Naive thymus-derived CD4-positive, alpha-beta T cell (primary cell): ENCODE measurements at regions of chrX and their contacts with region 1.

Region 1: DNA sequence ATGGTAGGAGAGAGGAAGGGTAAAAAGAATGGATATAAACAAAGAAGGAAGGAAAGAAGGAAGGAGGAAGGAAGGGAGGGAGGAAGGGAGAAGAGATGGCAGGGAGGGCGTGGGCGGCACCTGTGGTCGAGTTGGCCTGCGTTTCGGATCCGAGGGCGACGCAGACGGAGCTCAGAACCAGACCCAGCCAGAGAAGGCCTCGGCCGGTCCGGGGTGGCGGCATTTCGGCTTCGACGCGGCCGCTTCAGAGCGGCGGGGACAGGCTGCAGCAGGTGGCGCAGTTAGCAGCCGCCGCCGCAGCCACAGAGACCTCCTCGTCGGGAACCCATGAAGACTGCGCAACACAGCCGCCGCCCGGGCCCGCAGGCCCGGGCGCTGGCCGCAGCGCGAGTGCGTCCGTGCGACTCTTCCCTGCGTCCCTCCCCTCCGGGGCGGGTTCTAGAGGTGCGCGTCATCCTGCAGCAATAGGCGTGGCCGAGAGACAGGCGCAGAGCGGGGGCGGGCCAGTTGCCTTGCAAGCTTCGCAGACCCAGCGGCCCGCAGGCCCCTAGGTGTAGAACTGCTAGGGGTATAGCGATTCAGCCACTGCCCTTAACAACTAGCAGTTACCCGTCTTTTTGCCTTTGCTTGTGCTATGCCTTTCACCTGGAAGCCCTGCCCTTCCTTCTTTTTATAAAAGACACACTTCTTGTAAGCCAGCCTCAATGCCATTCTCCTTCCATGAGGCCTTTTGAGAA is at the start of gene IDS:
- DNase-seq: peak; percentile 68 to 88 (median 81)
- ATAC-seq: peak; percentile 85
- H3K4me3 ChIP-seq: peak within 1 kb of the TSS; percentile 72
- H3K4me3 Mint-ChIP-seq: peak within 1 kb of the TSS; percentile 86 to 100 (median 91)
- H3K27ac ChIP-seq: peak within 1 kb of the TSS; percentile 98
- H3K27ac Mint-ChIP-seq: peak within 1 kb of the TSS; percentile 87 to 98 (median 94)
- H3K4me1 ChIP-seq: peaks cover 6 to 13% of the 10 kb centered on the region in 2 donors
- H3K4me1 Mint-ChIP-seq: peaks cover 14 to 42% (median 23%) of the 10 kb centered on the region in 7 donors
- H3K27me3 ChIP-seq: no peaks in the 10 kb centered on the region
- H3K27me3 Mint-ChIP-seq: peaks cover 0 to 8% (median 0%) of the 10 kb centered on the region in 5 donors
- total RNA-seq, gene IDS: 73.1 to 317 (median 133) TPM

Region 2: GRCh38 chrX:147911192-147912022 is 1593.7 kb before region 1 on chrX and contains the start of gene FMR1:
- CTCF ChIA-PET with region 1: no interaction called
- POLR2A ChIA-PET with region 1: interaction called, 3 read pairs
- intact Hi-C with region 1: loop called (anchors 1 to 10 kb)
- DNase-seq: peak; percentile 83 to 95 (median 93)
- ATAC-seq: peak; percentile 96
- H3K4me3 ChIP-seq: peak within 1 kb of the TSS; percentile 71
- H3K4me3 Mint-ChIP-seq: peak within 1 kb of the TSS; percentile 87 to 98 (median 96)
- H3K27ac ChIP-seq: peak within 1 kb of the TSS; percentile 93
- H3K27ac Mint-ChIP-seq: peak within 1 kb of the TSS; percentile 87 to 97 (median 94)
- H3K4me1 ChIP-seq: peaks cover 0 to 35% of the 10 kb centered on the region in 2 donors
- H3K4me1 Mint-ChIP-seq: peaks cover 7 to 43% (median 34%) of the 10 kb centered on the region in 7 donors
- H3K27me3 ChIP-seq: no peaks in the 10 kb centered on the region
- H3K27me3 Mint-ChIP-seq: peaks cover 0 to 2% (median 0%) of the 10 kb centered on the region in 5 donors
- total RNA-seq, gene FMR1: 50.6 to 84.2 (median 76.8) TPM

Region 3: GRCh38 chrX:149521438-149521837 is 16.4 kb after region 1 on chrX:
- CTCF ChIA-PET with region 1: no interaction called
- POLR2A ChIA-PET with region 1: interaction called, 15 read pairs
- intact Hi-C with region 1: loop called (anchors 1 to 2 kb)
- DNase-seq: peak in 7 of 9 donors; percentile 17 to 51 (median 49)
- ATAC-seq: peak; percentile 30
- H3K4me3 ChIP-seq: no peak overlapping the region
- H3K4me3 Mint-ChIP-seq: peak overlapping the region; percentile 36 to 80 (median 68)
- H3K27ac ChIP-seq: no peak overlapping the region
- H3K27ac Mint-ChIP-seq: peak overlapping the region in 6 of 9 donors; percentile 21 to 79 (median 54)
- H3K4me1 ChIP-seq: peaks cover 32 to 48% of the 10 kb centered on the region in 2 donors
- H3K4me1 Mint-ChIP-seq: peaks cover 15 to 58% (median 32%) of the 10 kb centered on the region in 7 donors
- H3K27me3 ChIP-seq: no peaks in the 10 kb centered on the region
- H3K27me3 Mint-ChIP-seq: no peaks in the 10 kb centered on the region

Region 4: DNA sequence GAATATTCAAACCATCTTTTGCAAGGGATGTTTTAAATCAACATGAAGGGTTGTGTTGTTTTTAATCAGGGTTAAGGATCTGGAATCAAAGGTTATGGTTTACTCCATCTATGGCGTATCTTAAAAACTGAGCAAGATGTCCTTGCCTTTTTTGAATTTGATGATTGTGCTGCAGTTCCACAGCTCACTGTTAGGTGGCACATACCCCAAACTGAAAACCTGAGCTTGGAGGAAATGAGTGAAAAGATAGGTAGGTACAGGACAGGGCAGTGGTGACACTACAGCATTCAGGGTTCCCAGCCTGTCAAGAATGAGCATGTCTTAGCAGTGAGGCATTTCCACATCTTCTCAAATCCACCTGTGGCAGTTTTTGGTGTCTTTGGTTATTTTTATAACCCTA is 22.6 kb after region 1 on chrX:
- CTCF ChIA-PET with region 1: interaction called, 5 read pairs
- POLR2A ChIA-PET with region 1: interaction called, 15 read pairs
- intact Hi-C with region 1: loop called in 1 of 2 experiments (anchors 1 kb)
- DNase-seq: peak in 7 of 9 donors; percentile 27 to 62 (median 36)
- ATAC-seq: peak; percentile 43
- H3K4me3 ChIP-seq: no peak overlapping the region
- H3K4me3 Mint-ChIP-seq: peak overlapping the region in 3 of 10 donors; percentile 4 to 33 (median 10)
- H3K27ac ChIP-seq: no peak overlapping the region
- H3K27ac Mint-ChIP-seq: peak overlapping the region; percentile 35 to 88 (median 77)
- H3K4me1 ChIP-seq: peaks cover 18 to 26% of the 10 kb centered on the region in 2 donors
- H3K4me1 Mint-ChIP-seq: peaks cover 0 to 31% (median 14%) of the 10 kb centered on the region in 7 donors
- H3K27me3 ChIP-seq: no peaks in the 10 kb centered on the region
- H3K27me3 Mint-ChIP-seq: no peaks in the 10 kb centered on the region

Region 5: DNA sequence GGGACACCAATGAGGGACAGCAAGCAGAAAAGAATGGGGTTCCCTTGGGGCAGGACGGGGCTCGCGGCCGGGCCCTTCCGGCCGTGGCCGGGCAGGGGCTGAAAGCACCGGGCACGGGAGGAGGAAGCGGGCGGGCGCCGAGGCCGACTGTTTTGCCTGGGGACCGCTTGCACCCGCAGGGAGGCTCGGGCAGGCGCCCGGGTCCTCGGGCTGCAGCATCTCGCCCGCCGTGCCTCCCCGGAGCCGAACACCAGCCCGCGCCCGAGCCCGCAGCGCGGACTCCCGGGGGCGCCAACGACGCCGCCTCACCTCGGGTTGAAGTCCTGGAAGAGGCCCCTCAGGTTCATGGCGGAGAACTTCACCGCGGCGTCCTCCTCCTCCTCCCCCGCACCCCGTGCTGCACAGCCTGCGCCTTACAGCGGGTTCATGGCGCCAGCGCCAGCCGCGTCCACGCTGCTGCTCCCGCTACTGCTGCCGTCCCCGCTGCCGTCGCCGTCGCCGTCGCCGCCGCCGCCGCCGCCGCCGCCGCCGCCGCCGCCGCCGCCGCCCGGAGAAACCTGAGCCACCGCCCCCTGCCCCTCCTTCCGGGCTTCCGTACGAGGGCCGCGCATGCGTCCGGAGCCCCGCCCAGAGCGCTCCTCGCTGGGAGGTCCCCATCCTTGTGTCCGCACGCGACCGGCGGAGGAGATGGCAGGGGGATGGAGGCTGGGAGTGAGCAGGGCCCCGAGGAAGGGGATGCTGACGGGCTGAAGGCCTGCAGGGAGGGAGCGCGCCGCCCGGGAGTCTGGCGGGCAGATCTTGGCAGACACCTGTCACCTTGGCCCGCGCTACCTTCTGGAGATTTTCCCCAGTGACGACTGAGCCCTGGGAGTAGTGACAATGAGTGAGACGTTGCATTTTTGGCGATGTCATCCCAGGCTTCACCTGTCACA is 126.4 kb after region 1 on chrX and contains the start of gene TMEM185A:
- CTCF ChIA-PET with region 1: no interaction called
- POLR2A ChIA-PET with region 1: no interaction called
- intact Hi-C with region 1: loop called (anchors 2 to 10 kb)
- DNase-seq: peak; percentile 48 to 79 (median 71)
- ATAC-seq: peak; percentile 92
- H3K4me3 ChIP-seq: peak within 1 kb of the TSS; percentile 68
- H3K4me3 Mint-ChIP-seq: peak within 1 kb of the TSS; percentile 84 to 98 (median 92)
- H3K27ac ChIP-seq: peak within 1 kb of the TSS; percentile 72
- H3K27ac Mint-ChIP-seq: peak within 1 kb of the TSS; percentile 78 to 94 (median 83)
- H3K4me1 ChIP-seq: peaks cover 12% of the 10 kb centered on the region in 2 donors
- H3K4me1 Mint-ChIP-seq: peaks cover 29 to 43% (median 39%) of the 10 kb centered on the region in 7 donors
- H3K27me3 ChIP-seq: no peaks in the 10 kb centered on the region
- H3K27me3 Mint-ChIP-seq: peaks cover 0 to 9% (median 0%) of the 10 kb centered on the region in 5 donors
- total RNA-seq, gene TMEM185A: 11.9 to 23.4 (median 19.9) TPM

Region 6: GRCh38 chrX:149938427-149939270 is 433.6 kb after region 1 on chrX and contains the start of gene EOLA2:
- CTCF ChIA-PET with region 1: no interaction called
- POLR2A ChIA-PET with region 1: interaction called, 8 read pairs
- intact Hi-C with region 1: loop called in 1 of 2 experiments (anchors 10 kb)
- DNase-seq: peak; percentile 67 to 96 (median 92)
- ATAC-seq: peak; percentile 67
- H3K4me3 ChIP-seq: peak within 1 kb of the TSS; percentile 57
- H3K4me3 Mint-ChIP-seq: peak within 1 kb of the TSS; percentile 81 to 98 (median 92)
- H3K27ac ChIP-seq: peak within 1 kb of the TSS; percentile 90
- H3K27ac Mint-ChIP-seq: peak within 1 kb of the TSS; percentile 92 to 99 (median 99)
- H3K4me1 ChIP-seq: peaks cover 5% of the 10 kb centered on the region in 2 donors
- H3K4me1 Mint-ChIP-seq: peaks cover 0 to 7% (median 0%) of the 10 kb centered on the region in 7 donors
- H3K27me3 ChIP-seq: no peaks in the 10 kb centered on the region
- H3K27me3 Mint-ChIP-seq: no peaks in the 10 kb centered on the region
- total RNA-seq, gene EOLA2: 43.1 to 59.1 (median 45.4) TPM

Region 7: GRCh38 chrX:150693775-150694574 is 1188.9 kb after region 1 on chrX:
- CTCF ChIA-PET with region 1: no interaction called
- POLR2A ChIA-PET with region 1: no interaction called
- intact Hi-C with region 1: loop called in 1 of 2 experiments (anchors 10 kb)
- DNase-seq: peak; percentile 12 to 65 (median 51)
- ATAC-seq: peak; percentile 62
- H3K4me3 ChIP-seq: peak overlapping the region; percentile 61
- H3K4me3 Mint-ChIP-seq: peak overlapping the region; percentile 85 to 98 (median 94)
- H3K27ac ChIP-seq: peak overlapping the region; percentile 80
- H3K27ac Mint-ChIP-seq: peak overlapping the region; percentile 95 to 99 (median 97)
- H3K4me1 ChIP-seq: peaks cover 37 to 42% of the 10 kb centered on the region in 2 donors
- H3K4me1 Mint-ChIP-seq: peaks cover 25 to 68% (median 61%) of the 10 kb centered on the region in 7 donors
- H3K27me3 ChIP-seq: no peaks in the 10 kb centered on the region
- H3K27me3 Mint-ChIP-seq: no peaks in the 10 kb centered on the region